Lower leg skin (tissue), 4 donors: ENCODE measurements at regions of chrX and their contacts with region 1.

Region 1: DNA sequence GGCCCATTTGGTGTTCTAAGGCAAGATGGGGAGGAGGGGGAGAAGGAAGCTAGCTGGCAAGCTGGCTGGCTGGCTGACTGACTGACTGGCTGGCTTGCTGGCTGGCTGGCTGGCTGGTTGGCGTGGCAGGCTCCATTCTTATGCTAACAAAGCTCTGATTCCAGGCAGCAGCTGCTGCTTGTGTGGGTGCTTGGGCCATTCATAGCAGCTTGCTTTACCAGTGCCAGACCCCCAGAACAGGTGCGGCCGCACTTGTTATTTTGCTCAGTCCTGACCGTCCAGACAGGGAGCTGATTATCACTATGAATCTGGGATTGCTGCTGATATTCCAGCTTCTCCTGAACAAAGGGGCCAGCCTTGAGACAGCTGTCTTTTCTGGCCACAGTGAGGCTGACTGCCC is 131.2 kb upstream of the PAK3 start:
- DNase-seq: no peak
- H3K4me3 ChIP-seq: no peak overlapping the region
- CTCF ChIP-seq: no peak
- POLR2A ChIP-seq: no peak

Region 2: GRCh38 chrX:111010111-111010510 is 45.3 kb after region 1 on chrX:
- intact Hi-C with region 1: no loop called
- DNase-seq: no peak
- H3K4me3 ChIP-seq: no peak overlapping the region
- CTCF ChIP-seq: no peak
- POLR2A ChIP-seq: no peak

Region 3: DNA sequence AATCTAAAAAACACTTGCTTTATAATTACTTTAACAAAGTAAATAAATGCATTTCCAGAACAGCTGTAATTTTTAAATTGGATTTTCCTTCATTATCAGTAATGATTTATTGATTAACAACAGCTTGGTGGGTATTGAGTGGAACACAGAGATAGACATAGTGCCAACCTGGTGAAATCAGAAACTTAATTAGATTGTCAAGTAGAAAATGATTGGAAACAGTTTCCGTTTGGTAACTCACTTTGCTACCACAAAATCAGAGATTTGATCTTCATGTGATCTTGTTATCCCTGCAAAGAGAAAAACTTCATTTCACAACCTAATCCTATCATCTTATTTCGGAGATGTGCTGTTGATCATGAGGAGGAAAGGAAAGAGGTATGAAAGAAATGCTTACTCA is 234.7 kb after region 1 on chrX:
- intact Hi-C with region 1: loop called (anchors 5 kb)
- DNase-seq: no peak
- H3K4me3 ChIP-seq: no peak overlapping the region
- CTCF ChIP-seq: no peak
- POLR2A ChIP-seq: no peak

Region 4: GRCh38 chrX:111254896-111255693 is 290.3 kb after region 1 on chrX:
- intact Hi-C with region 1: no loop called
- DNase-seq: no peak
- H3K4me3 ChIP-seq: no peak overlapping the region
- CTCF ChIP-seq: no peak
- POLR2A ChIP-seq: no peak